IMR-90 (cell line): ENCODE measurements at regions of chr5 and their contacts with region 1.

Region 1: DNA sequence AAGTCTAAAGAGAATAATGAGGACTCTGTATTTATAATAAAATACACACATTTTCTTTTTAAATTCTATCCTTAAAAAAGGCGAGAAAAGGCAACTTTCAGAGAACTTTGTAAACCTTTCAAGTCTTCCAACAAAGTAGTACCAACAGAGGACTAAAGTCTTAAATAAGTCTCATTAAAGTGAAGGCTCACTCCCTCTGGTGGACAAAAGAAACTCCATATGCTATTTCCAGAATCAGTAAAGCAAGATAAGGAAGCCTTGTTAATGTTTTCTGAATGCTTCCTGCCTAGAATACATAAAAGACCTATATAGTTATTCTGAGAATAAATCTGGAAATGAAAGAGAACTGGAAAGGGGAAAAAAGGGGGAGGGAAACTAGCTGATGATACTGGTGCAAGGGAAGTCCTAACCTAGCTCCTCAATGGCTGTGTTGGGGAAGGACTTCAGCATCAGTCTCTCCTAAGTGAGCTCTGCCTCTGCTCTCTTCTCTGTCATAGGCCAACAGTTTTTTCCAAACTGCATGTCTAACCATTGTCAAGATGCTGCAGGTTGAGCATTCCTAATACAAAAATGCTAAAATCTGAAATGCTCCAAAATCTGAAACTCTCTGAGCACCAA is 7.2 kb downstream of the HMGCS1 start:
- DNase-seq: peak; percentile 73
- ATAC-seq: peak; percentile 85
- H3K4me3 ChIP-seq: no peak overlapping the region
- H3K27ac ChIP-seq: no peak overlapping the region
- H3K4me1 ChIP-seq: no peaks in the 10 kb centered on the region
- H3K27me3 ChIP-seq: no peaks in the 10 kb centered on the region
- CTCF ChIP-seq: peak; percentile 68
- POLR2A ChIP-seq: no peak
- RAD21 ChIP-seq: peak; percentile 55

Region 2: DNA sequence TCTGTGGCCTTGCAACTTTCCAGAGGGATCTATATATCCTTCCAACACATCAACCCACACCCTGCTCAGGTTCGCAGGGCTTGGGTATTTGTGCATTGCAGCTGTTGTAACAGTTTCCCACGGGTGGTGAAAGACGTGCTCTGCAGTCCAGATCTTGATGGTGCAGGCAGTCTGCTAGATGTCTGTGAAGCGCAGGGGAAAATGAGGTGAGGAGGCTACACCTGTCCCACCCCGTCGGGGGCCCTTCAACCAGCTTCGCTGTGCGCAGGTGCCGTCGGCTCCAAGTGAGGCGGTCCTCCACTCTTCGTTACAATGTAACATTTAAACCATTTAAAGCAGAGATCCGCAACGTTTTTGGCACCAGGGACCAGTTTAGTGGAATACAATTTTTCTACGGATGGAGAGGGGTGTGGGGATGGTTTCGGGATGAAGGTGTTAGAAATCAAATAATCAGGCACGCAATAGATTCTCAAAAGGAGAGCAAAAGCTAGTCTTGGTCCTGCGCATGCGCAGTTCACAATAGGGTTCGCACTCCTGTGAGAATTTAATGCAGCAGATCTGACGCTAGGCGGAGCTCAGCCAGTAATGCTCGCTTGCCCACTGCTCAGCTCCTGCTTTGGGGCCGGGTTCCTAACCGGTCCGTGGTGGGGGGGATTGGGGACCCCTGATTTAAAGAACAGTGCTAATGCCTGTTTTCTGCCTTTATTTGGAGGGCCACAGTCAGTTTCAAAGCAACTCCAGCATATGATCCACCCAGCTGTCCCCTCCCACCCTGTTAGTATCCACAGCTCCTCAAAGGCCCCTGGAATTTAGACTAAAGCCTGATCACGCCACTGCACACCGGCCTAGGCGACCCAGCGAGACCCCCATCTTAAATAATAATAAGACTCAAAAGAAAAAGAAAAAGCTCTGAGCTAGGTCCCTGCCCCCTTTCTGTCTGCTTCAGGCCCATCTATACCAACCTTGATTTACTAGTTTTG is 397.3 kb before region 1 on chr5:
- CTCF ChIA-PET with region 1: no interaction called
- POLR2A ChIA-PET with region 1: no interaction called
- dilution Hi-C with region 1: no loop called
- in situ Hi-C with region 1: loop called (anchors 10 kb)
- intact Hi-C with region 1: no loop called
- DNase-seq: peak; percentile 85
- ATAC-seq: peak; percentile 96
- H3K4me3 ChIP-seq: peak overlapping the region; percentile 50
- H3K27ac ChIP-seq: no peak overlapping the region
- H3K4me1 ChIP-seq: no peaks in the 10 kb centered on the region
- H3K27me3 ChIP-seq: peaks cover 13% of the 10 kb centered on the region
- CTCF ChIP-seq: peak; percentile 83
- POLR2A ChIP-seq: no peak
- RAD21 ChIP-seq: peak; percentile 78

Region 3: DNA sequence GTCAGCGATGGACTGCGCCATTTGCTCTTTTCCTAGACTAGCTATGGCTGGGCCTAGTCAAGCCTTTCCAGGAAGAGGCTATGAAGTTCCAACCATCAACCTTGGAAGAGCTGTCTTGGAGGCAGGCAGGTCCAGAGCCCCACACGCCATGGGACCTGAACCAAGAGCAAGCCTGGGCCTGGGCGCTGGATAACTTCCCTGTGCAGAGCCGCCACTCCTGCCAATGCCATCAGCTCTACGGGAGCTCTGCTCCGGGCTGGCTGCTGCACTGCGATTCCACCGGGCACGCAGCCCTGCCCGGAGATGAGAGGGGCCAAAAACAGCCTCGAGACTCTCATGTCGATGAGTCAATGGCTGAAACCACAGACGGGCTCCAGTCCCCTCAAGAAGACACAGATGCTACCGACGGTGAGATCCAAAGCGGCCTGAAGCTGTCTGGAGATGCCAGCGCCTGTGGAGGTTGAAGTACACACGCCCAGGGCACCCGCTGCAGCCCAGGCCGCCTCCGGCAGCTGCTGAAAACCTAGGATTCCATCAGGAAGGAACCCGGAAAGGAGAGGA is 390.7 kb before region 1 on chr5:
- CTCF ChIA-PET with region 1: no interaction called
- POLR2A ChIA-PET with region 1: no interaction called
- dilution Hi-C with region 1: no loop called
- in situ Hi-C with region 1: no loop called
- intact Hi-C with region 1: loop called (anchors 2 kb)
- DNase-seq: no peak
- ATAC-seq: no peak
- H3K4me3 ChIP-seq: no peak overlapping the region
- H3K27ac ChIP-seq: no peak overlapping the region
- H3K4me1 ChIP-seq: no peaks in the 10 kb centered on the region
- H3K27me3 ChIP-seq: no peaks in the 10 kb centered on the region
- CTCF ChIP-seq: no peak
- POLR2A ChIP-seq: no peak
- RAD21 ChIP-seq: no peak

Region 4: GRCh38 chr5:43073597-43074546 is 232.2 kb before region 1 on chr5:
- CTCF ChIA-PET with region 1: interaction called, 4 read pairs
- POLR2A ChIA-PET with region 1: no interaction called
- dilution Hi-C with region 1: no loop called
- in situ Hi-C with region 1: no loop called
- intact Hi-C with region 1: loop called (anchors 1 kb)
- DNase-seq: peak; percentile 40
- ATAC-seq: peak; percentile 44; the same call in 1 of the 2 replicates
- H3K4me3 ChIP-seq: no peak overlapping the region
- H3K27ac ChIP-seq: no peak overlapping the region
- H3K4me1 ChIP-seq: peaks cover 4% of the 10 kb centered on the region; the same call in 1 of the 2 replicates
- H3K27me3 ChIP-seq: no peaks in the 10 kb centered on the region
- CTCF ChIP-seq: peak; percentile 58
- POLR2A ChIP-seq: no peak
- RAD21 ChIP-seq: peak; percentile 66

Region 5: DNA sequence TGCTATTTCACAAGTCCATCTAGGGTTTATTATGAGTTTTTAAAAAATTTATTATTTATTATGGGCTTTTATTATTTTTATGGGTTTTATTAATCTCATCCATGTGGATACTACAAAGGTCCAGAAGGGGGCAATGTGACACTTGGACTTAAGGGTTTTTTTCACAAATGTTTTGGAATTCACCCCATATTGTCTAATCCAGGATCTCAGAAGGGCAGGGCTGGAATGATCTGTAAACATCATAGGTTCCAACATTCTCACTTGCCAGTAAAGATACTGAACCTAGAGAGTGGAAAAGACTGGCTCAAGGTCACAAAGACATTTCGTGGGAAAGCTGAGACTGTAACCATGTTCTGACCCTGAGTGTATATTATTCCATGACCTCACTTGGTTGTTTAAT is 78.4 kb before region 1 on chr5:
- CTCF ChIA-PET with region 1: no interaction called
- POLR2A ChIA-PET with region 1: no interaction called
- dilution Hi-C with region 1: no loop called
- in situ Hi-C with region 1: no loop called
- intact Hi-C with region 1: loop called (anchors 1 kb)
- DNase-seq: peak; percentile 64
- ATAC-seq: peak; percentile 83
- H3K4me3 ChIP-seq: no peak overlapping the region
- H3K27ac ChIP-seq: no peak overlapping the region
- H3K4me1 ChIP-seq: no peaks in the 10 kb centered on the region
- H3K27me3 ChIP-seq: peaks cover 4% of the 10 kb centered on the region; the same call in 1 of the 2 replicates
- CTCF ChIP-seq: peak; percentile 67
- POLR2A ChIP-seq: no peak
- RAD21 ChIP-seq: peak; percentile 58

Region 6: DNA sequence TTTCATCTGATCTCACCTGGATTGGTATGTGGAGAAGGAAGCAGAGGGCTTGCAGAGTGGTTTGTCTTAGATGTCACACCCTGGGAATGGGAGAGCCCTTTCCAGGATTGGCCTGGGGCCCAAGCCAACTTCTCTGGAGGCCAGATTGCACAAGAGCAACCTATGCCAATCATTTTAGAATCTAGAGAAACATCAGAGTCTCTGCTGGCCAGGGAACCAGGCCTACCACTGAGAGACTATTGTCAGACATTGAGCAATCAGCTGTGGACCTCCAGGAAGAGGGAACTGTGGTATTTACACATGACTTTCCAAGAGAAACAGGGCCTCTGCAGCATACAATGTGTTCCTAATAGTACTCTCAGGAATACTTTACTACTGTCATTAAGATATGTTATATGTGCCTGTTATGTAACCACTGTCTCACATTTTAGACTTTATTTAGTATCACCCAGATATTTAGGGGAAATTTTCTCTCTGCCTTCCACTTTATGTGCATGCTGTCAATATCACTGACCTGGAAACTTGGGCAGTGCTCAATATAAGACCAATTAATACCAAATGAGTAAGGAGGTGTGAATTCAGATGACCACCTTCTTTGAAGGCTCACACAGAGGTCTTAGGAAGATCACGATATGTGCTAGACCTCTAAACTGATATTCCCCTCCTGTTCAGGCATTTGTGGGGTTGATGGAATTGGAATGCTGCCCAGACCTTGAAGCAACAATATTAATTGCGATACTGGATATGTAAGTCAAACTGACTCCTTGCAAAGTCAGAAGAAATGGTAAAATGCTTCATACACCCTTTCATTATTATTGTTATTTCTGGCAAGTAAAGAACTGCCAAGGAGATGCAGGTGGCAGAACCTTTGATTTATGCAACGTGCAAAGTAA is 126.7 kb after region 1 on chr5:
- CTCF ChIA-PET with region 1: no interaction called
- POLR2A ChIA-PET with region 1: no interaction called
- dilution Hi-C with region 1: no loop called
- in situ Hi-C with region 1: no loop called
- intact Hi-C with region 1: no loop called
- DNase-seq: peak; percentile 52
- ATAC-seq: peak; percentile 71
- H3K4me3 ChIP-seq: no peak overlapping the region
- H3K27ac ChIP-seq: no peak overlapping the region
- H3K4me1 ChIP-seq: peaks cover 3% of the 10 kb centered on the region
- H3K27me3 ChIP-seq: no peaks in the 10 kb centered on the region
- CTCF ChIP-seq: no peak
- POLR2A ChIP-seq: no peak
- RAD21 ChIP-seq: no peak